ENCODE measurements at regions of chr20 and their contacts with region 1.

Region 1: GRCh38 chr20:33781133-33781532 is 30.0 kb upstream of the CHMP4B start:
- DNase-seq: no peak
- ATAC-seq: no peak
- H3K4me3 Mint-ChIP-seq: peak overlapping the region; percentile 12
- H3K27ac Mint-ChIP-seq: peak overlapping the region; percentile 95
- H3K4me1 Mint-ChIP-seq: peaks cover 86% of the 10 kb centered on the region
- H3K27me3 Mint-ChIP-seq: no peaks in the 10 kb centered on the region
- CTCF ChIP-seq: no peak

Region 2: DNA sequence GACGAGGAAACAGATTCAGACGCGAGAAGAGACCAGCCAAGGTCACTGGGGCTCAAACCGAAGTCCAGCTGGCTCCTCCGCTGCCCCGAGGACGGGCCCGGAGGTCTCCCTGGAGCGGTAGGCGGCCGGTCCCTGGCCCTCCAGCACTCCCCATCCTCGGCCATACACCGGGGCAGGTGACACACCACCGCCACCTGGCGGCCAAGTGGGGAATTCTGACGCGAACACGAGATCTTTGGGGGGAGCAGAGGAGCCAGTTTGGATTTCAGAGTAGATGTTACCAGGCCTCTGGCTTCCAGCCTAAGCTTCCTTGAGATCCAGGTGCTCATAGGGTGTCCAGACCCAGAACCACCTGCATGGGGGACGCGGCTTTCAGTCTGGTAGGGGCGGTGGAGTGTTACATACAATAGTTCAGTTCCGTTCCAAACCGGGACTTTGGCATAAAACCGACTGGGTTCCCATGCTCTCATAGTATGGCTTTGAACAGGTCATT is 482.0 kb before region 1 on chr20:
- CTCF ChIA-PET with region 1: no interaction called
- POLR2A ChIA-PET with region 1: no interaction called
- intact Hi-C with region 1: no loop called
- DNase-seq: peak; percentile 69
- ATAC-seq: peak; percentile 75
- H3K4me3 Mint-ChIP-seq: no peak overlapping the region
- H3K27ac Mint-ChIP-seq: no peak overlapping the region
- H3K4me1 Mint-ChIP-seq: no peaks in the 10 kb centered on the region
- H3K27me3 Mint-ChIP-seq: peaks cover 13% of the 10 kb centered on the region
- CTCF ChIP-seq: peak; percentile 95

Region 3: GRCh38 chr20:33408716-33409654 is 372.1 kb before region 1 on chr20:
- CTCF ChIA-PET with region 1: no interaction called
- POLR2A ChIA-PET with region 1: no interaction called
- intact Hi-C with region 1: loop called (anchors 1 kb)
- DNase-seq: peak; percentile 39
- ATAC-seq: peak; percentile 90
- H3K4me3 Mint-ChIP-seq: peak overlapping the region; percentile 61
- H3K27ac Mint-ChIP-seq: peak overlapping the region; percentile 90
- H3K4me1 Mint-ChIP-seq: peaks cover 44% of the 10 kb centered on the region
- H3K27me3 Mint-ChIP-seq: no peaks in the 10 kb centered on the region
- CTCF ChIP-seq: no peak

Region 4: GRCh38 chr20:33686100-33686983 is 94.8 kb before region 1 on chr20 and contains the start of gene E2F1:
- CTCF ChIA-PET with region 1: no interaction called
- POLR2A ChIA-PET with region 1: interaction called, 3 read pairs
- intact Hi-C with region 1: loop called (anchors 2 kb)
- DNase-seq: peak; percentile 95
- ATAC-seq: peak; percentile 93
- H3K4me3 Mint-ChIP-seq: peak within 1 kb of the TSS; percentile 86
- H3K27ac Mint-ChIP-seq: peak within 1 kb of the TSS; percentile 77
- H3K4me1 Mint-ChIP-seq: peaks cover 30% of the 10 kb centered on the region
- H3K27me3 Mint-ChIP-seq: no peaks in the 10 kb centered on the region
- CTCF ChIP-seq: no peak
- total RNA-seq, gene E2F1: 6.7 and 8.9 TPM in 2 replicates

Region 5: GRCh38 chr20:33753763-33754162 is 27.4 kb before region 1 on chr20:
- CTCF ChIA-PET with region 1: interaction called, 3 read pairs
- POLR2A ChIA-PET with region 1: interaction called, 9 read pairs
- intact Hi-C with region 1: loop called (anchors 1 kb)
- DNase-seq: no peak
- ATAC-seq: no peak
- H3K4me3 Mint-ChIP-seq: no peak overlapping the region
- H3K27ac Mint-ChIP-seq: no peak overlapping the region
- H3K4me1 Mint-ChIP-seq: peaks cover 13% of the 10 kb centered on the region
- H3K27me3 Mint-ChIP-seq: no peaks in the 10 kb centered on the region
- CTCF ChIP-seq: no peak

Region 6: DNA sequence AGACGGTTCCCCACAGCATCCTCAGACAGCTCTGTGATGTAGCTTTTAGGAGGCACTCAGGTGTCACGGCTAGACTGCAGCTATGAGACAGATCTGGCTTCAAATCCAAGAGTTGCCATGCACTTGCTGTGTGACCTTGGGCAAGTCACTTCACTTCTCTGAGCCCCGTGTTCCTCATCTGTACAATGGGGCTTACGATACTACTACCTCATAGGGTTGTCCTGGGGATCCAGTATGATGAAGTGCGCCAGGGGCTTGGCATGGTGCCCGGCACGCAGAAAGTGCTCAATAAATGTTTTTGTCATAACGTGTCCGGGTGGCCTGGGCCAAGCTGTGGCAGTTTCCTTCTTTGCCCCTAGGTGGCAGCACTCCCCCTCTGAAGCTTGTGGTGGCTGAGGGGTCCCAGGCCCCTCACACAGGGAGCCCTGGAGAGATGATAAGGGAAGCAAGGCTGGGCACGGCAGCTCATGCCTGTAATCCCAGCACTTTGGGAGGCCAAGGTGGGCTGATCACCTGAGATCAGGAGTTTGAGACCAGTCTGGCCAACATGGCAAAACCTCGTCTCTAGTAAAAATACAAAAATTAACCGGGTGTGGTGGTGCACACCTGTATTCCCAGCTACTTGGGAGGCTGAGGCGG is 10.9 kb after region 1 on chr20:
- CTCF ChIA-PET with region 1: no interaction called
- POLR2A ChIA-PET with region 1: interaction called, 4 read pairs
- intact Hi-C with region 1: loop called (anchors 2 kb)
- DNase-seq: peak; percentile 55
- ATAC-seq: peak; percentile 90
- H3K4me3 Mint-ChIP-seq: no peak overlapping the region
- H3K27ac Mint-ChIP-seq: peak overlapping the region; percentile 35
- H3K4me1 Mint-ChIP-seq: peaks cover 16% of the 10 kb centered on the region
- H3K27me3 Mint-ChIP-seq: no peaks in the 10 kb centered on the region
- CTCF ChIP-seq: peak; percentile 56

Region 7: DNA sequence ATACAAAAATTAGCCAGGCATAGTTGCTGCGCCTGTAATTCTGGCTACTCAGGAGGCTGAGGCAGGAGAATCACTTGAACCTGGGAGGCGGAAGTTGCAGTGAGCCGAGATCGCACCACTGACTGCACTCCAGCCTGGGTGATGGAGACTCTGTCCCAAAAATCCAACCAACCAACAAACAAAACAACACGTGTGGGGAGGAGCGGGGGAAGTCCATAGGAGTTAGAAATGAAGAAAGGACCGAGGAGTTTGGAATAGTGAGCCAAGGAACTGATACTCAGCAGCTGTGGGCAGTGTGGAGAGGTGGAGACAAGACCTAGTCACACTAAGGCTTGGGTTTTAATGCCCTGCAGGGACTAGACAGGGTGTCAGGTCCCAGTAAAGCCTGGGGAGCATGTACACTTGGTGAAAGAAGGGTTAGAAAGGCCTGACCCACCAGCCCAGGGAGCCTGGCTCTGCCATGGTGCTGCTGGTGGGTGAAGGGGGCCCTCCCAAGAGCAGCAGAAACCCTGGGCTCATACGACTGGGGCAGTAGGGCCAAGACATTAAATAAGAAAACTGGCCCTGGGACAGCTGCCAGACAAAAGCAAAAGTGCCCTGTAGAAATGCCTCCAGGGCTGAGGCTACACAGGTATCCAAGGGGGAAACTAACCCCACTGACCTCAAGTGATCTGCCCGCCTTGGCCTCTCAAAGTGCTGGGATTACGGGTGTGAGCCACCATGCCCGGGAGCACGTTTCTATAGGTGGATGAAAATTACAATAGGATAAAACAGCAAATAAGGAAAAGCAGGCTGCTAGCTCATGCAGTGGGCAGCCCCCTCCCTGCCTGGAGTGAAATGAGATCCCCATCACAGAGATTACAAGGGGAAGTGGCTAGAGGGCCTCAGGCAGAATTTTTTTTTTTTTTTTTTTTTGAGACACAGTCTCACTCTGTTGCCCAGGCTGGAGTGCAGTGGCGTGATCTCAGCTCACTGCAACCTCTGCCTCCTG is 1232.6 kb after region 1 on chr20:
- CTCF ChIA-PET with region 1: no interaction called
- POLR2A ChIA-PET with region 1: no interaction called
- intact Hi-C with region 1: no loop called
- DNase-seq: no peak
- ATAC-seq: peak; percentile 45
- H3K4me3 Mint-ChIP-seq: no peak overlapping the region
- H3K27ac Mint-ChIP-seq: peak overlapping the region; percentile 79
- H3K4me1 Mint-ChIP-seq: peaks cover 20% of the 10 kb centered on the region
- H3K27me3 Mint-ChIP-seq: no peaks in the 10 kb centered on the region
- CTCF ChIP-seq: no peak

Measured in activated B cell treated with CpG ODN at 0.5 μM for 24 hours (primary cell).